ENCODE measurements at regions of chr4 and their contacts with region 1.

Region 1: GRCh38 chr4:79198951-79199587 is 126.8 kb downstream of the NAA11 start:
- DNase-seq: no peak
- H3K4me3 ChIP-seq: no peak overlapping the region
- H3K27ac ChIP-seq: no peak overlapping the region
- H3K4me1 ChIP-seq: no peaks in the 10 kb centered on the region
- H3K27me3 ChIP-seq: no peaks in the 10 kb centered on the region
- CTCF ChIP-seq: no peak
- EP300 ChIP-seq: no peak
- POLR2A ChIP-seq: no peak

Region 2: GRCh38 chr4:78902298-78902697 is 296.8 kb before region 1 on chr4:
- intact Hi-C with region 1: loop called in 1 of 4 experiments (anchors 5 kb)
- DNase-seq: no peak
- H3K4me3 ChIP-seq: no peak overlapping the region
- H3K27ac ChIP-seq: no peak overlapping the region
- H3K4me1 ChIP-seq: no peaks in the 10 kb centered on the region
- H3K27me3 ChIP-seq: no peaks in the 10 kb centered on the region
- CTCF ChIP-seq: no peak
- EP300 ChIP-seq: no peak
- POLR2A ChIP-seq: no peak